ENCODE measurements at regions of chr6 and their contacts with region 1.

Region 1: GRCh38 chr6:43053545-43054205 is at the start of gene CUL7:
- DNase-seq: peak; percentile 69 to 96
- H3K4me3 ChIP-seq: peak within 1 kb of the TSS; percentile 71
- H3K27ac ChIP-seq: peak within 1 kb of the TSS; percentile 87 to 98
- H3K4me1 ChIP-seq: peaks cover 5 to 22% of the 10 kb centered on the region in 2 donors
- H3K27me3 ChIP-seq: no peaks in the 10 kb centered on the region
- CTCF ChIP-seq: no peak
- total RNA-seq, gene CUL7: 26.7 TPM

Region 2: GRCh38 chr6:42901536-42901957 is 152.1 kb before region 1 on chr6:
- intact Hi-C with region 1: loop called (anchors 5 kb)
- DNase-seq: peak in 1 of 2 donors; percentile 87
- H3K4me3 ChIP-seq: no peak overlapping the region
- H3K27ac ChIP-seq: no peak overlapping the region
- H3K4me1 ChIP-seq: peaks cover 0 to 18% of the 10 kb centered on the region in 2 donors
- H3K27me3 ChIP-seq: no peaks in the 10 kb centered on the region
- CTCF ChIP-seq: peak; percentile 83 to 92 (median 88)

Region 3: DNA sequence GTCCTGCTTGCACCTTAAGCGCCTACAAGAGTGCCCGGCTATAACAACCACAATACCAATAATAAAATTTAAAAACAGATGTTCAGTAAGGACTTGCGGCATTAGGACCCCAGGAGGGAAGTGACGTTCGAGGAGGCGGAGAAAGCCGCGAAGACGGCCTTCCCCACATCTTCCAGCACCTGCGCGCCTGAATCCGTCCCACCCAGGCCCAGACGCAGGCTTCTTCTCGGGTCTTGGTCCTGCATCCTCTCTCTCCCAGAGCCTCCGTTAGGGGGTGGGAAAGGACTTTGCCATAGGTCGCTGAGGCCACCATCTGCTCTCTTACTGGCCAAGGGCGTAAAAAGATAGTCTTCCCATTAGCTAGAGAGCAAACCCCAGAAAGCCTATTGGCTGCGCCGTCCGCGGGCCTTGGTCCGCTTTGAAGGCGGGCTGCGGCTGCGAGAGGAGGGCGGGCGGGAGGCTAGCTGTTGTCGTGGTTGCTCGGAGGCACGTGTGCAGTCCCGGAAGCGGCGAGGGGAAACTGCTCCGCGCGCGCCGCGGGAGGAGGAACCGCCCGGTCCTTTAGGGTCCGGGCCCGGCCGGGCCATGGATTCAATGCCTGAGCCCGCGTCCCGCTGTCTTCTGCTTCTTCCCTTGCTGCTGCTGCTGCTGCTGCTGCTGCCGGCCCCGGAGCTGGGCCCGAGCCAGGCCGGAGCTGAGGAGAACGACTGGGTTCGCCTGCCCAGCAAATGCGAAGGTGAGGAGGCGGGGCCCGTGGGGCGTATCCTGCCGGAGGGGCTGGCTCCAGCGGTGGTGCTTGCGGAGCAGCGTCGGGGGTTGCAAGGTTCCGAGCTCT is 124.5 kb before region 1 on chr6 and contains the start of gene CNPY3:
- intact Hi-C with region 1: loop called (anchors 2 kb)
- DNase-seq: peak; percentile 86 to 97
- H3K4me3 ChIP-seq: peak within 1 kb of the TSS; percentile 69 to 79
- H3K27ac ChIP-seq: peak within 1 kb of the TSS; percentile 81 to 87
- H3K4me1 ChIP-seq: peaks cover 0 to 12% of the 10 kb centered on the region in 2 donors
- H3K27me3 ChIP-seq: no peaks in the 10 kb centered on the region
- CTCF ChIP-seq: no peak
- total RNA-seq, gene CNPY3: 49.6 TPM

Region 4: GRCh38 chr6:42978839-42979522 is 74.7 kb before region 1 on chr6 and contains the start of gene PEX6:
- intact Hi-C with region 1: loop called (anchors 1 kb)
- DNase-seq: peak; percentile 37 to 94
- H3K4me3 ChIP-seq: peak within 1 kb of the TSS; percentile 84 to 92
- H3K27ac ChIP-seq: peak within 1 kb of the TSS; percentile 85 to 90
- H3K4me1 ChIP-seq: peaks cover 0 to 27% of the 10 kb centered on the region in 2 donors
- H3K27me3 ChIP-seq: no peaks in the 10 kb centered on the region
- CTCF ChIP-seq: no peak
- total RNA-seq, gene PEX6: 8.9 TPM

Region 5: GRCh38 chr6:42984001-42984923 is 69.4 kb before region 1 on chr6 and contains the start of gene PPP2R5D:
- intact Hi-C with region 1: loop called (anchors 1 kb)
- DNase-seq: peak; percentile 95 to 99
- H3K4me3 ChIP-seq: peak within 1 kb of the TSS; percentile 69 to 99
- H3K27ac ChIP-seq: peak within 1 kb of the TSS; percentile 76 to 92
- H3K4me1 ChIP-seq: peaks cover 18 to 47% of the 10 kb centered on the region in 2 donors
- H3K27me3 ChIP-seq: no peaks in the 10 kb centered on the region
- CTCF ChIP-seq: no peak
- total RNA-seq, gene PPP2R5D: 27.7 TPM

Region 6: DNA sequence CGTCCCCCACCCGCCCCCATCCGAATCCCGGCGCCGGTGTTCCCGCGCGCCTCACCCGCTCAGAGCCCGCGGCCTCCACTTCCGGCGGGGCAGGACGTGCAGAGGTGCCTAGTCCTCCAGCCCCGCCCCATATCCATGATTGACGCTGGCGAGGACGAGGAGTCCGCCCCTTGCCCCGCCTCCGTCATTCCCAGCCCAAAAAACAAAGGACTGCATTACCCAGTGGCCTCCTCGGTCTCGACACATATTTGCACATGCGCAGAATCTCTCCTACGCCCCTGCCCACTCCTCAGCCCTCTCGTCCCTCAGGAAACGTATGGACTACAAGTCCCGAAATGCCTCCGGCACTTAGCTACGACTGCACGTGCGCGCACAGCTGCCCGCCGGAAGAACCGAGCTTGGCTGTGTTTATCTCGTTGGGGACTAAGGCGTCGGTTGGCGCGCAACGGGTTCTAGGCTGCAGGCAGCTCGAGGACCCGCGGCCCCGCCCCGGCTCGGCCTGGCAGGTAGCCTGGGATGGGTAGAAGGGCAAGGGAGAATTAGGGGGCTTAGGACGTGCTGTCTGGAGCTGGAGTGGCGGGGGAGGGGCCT is 39.7 kb before region 1 on chr6 and contains the starts of genes KLHDC3 and MEA1:
- intact Hi-C with region 1: no loop called
- DNase-seq: peak; percentile 99 to 100
- H3K4me3 ChIP-seq: peak within 1 kb of the TSS; percentile 76 to 81
- H3K27ac ChIP-seq: peak within 1 kb of the TSS; percentile 81 to 82
- H3K4me1 ChIP-seq: peaks cover 13 to 33% of the 10 kb centered on the region in 2 donors
- H3K27me3 ChIP-seq: no peaks in the 10 kb centered on the region
- CTCF ChIP-seq: no peak
- total RNA-seq, gene KLHDC3: 64.0 TPM
- total RNA-seq, gene MEA1: 61.1 TPM

Region 7: DNA sequence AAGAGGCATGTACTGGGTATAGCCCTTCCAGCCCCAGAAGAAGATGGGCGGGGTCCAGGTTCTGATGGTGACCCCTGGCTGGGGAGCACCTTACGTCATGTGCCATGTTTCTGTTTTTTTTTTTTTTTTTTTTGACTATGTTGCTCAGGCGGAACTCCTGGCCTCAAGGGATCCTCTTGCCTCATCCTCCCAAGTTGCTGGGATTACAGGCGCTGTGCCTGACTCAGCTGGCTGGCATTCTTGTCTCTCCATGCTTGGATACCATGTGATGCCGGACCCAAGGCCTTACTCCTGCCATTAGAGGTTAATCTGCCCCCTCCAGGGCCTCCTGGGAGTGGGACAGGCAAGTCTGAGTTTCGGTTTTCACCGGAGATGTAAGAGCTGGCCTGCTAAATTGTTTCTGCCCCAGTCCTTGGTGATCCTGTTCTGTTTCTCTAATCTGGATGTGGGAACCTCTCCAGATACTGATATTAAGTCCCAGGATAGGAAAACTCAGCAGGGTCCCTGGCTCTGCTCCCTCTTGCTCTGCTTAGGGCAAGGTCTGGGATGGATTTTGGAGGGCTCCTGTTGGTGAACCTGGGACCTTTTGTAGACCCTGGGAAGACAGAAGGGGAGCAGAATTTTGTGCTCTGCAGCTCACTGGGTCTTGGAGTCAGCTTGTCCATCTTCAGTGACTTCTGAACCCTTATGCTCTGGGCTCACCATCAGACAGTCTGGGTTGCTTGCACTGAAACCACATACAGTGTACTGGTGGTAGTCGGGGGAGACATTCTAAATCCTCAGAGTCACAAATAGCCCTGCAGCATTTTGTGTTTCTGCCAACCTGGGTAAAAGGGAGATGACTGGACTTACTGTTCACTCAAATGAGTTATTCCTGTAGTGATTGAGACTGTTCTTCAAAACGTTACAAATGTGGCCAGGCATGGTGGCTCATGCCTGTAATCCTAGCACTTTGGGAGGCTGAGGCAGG is 67.6 kb after region 1 on chr6:
- intact Hi-C with region 1: loop called (anchors 2 kb)
- DNase-seq: peak; percentile 52 to 94
- H3K4me3 ChIP-seq: no peak overlapping the region
- H3K27ac ChIP-seq: peak overlapping the region; percentile 70 to 71
- H3K4me1 ChIP-seq: peaks cover 2 to 15% of the 10 kb centered on the region in 2 donors
- H3K27me3 ChIP-seq: no peaks in the 10 kb centered on the region
- CTCF ChIP-seq: no peak

Measured in ascending aorta (tissue), 2 donors.